MCF 10A (cell line): ENCODE measurements at regions of chr3 and their contacts with region 1.

Region 1: GRCh38 chr3:152754303-152754702 is 80.6 kb upstream of the P2RY1 start:
- DNase-seq: no peak
- H3K4me3 Mint-ChIP-seq: no peak overlapping the region
- H3K27ac Mint-ChIP-seq: no peak overlapping the region
- H3K4me1 Mint-ChIP-seq: no peaks in the 10 kb centered on the region
- H3K27me3 Mint-ChIP-seq: no peaks in the 10 kb centered on the region
- CTCF ChIP-seq: no peak

Region 2: DNA sequence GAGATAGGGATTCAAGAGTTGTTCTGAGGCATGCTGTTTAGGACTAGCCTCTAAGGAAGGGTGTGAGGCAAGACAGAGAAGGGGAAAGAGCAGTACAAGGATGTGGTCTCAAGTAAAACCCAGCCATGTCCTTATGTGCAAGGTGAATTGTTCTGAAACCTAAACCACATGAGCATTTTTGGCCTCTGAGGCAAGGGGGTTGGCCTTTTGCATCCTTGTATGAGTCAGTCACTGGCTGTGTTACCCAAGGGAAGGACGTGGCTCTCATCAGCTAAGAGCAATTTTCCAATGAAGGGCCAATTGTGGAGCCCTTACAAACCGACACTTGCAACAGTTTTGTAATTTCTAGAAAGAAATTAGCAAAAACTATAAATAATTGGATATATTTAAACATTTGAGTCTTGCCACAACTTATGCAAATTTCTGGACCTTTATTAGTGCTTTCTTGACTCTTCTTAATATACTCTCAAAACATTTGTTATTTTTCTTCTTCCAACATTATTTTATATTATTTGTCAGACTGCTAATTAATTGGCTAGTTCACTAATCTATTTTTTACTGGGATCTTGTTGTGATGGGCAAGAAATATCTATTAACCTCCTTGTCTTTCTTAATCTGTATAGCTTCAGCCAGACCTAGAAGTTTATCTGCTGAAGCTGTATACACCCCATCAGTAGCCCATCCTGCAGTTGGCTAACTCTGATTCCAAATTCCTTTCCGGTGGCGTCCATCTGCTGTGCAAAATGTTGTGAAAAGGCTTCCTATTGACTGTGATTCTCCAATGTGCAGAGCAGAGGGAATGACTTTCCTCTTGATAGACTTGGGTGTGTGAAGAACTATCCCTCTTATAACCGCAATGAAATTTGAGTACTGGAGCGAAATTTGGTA is 17.0 kb before region 1 on chr3:
- CTCF ChIA-PET with region 1: no interaction called
- POLR2A ChIA-PET with region 1: no interaction called
- intact Hi-C with region 1: no loop called
- DNase-seq: peak; percentile 81
- H3K4me3 Mint-ChIP-seq: no peak overlapping the region
- H3K27ac Mint-ChIP-seq: no peak overlapping the region
- H3K4me1 Mint-ChIP-seq: peaks cover 6% of the 10 kb centered on the region
- H3K27me3 Mint-ChIP-seq: no peaks in the 10 kb centered on the region
- CTCF ChIP-seq: no peak

Region 3: DNA sequence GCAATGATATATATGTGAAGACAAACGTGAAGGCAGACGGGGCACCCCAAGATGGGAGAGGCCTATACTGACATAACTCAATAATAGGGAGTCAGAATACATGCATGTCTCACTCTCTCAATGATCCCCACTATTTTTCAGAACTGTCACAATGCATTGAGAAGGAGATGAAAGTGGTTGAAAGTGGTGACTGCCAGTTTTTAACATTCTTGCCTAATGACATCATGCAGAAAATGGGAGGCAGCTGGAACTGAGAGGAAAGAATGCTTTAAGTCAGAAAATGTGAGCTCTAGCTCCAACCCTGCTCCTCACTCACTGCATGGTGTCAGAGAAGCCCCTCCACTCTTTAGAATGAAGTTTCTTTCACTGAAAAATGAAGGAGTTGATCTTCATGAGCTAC is 25.4 kb after region 1 on chr3:
- CTCF ChIA-PET with region 1: no interaction called
- POLR2A ChIA-PET with region 1: no interaction called
- intact Hi-C with region 1: no loop called
- DNase-seq: peak; percentile 8
- H3K4me3 Mint-ChIP-seq: no peak overlapping the region
- H3K27ac Mint-ChIP-seq: no peak overlapping the region
- H3K4me1 Mint-ChIP-seq: no peaks in the 10 kb centered on the region
- H3K27me3 Mint-ChIP-seq: no peaks in the 10 kb centered on the region
- CTCF ChIP-seq: no peak

Region 4: DNA sequence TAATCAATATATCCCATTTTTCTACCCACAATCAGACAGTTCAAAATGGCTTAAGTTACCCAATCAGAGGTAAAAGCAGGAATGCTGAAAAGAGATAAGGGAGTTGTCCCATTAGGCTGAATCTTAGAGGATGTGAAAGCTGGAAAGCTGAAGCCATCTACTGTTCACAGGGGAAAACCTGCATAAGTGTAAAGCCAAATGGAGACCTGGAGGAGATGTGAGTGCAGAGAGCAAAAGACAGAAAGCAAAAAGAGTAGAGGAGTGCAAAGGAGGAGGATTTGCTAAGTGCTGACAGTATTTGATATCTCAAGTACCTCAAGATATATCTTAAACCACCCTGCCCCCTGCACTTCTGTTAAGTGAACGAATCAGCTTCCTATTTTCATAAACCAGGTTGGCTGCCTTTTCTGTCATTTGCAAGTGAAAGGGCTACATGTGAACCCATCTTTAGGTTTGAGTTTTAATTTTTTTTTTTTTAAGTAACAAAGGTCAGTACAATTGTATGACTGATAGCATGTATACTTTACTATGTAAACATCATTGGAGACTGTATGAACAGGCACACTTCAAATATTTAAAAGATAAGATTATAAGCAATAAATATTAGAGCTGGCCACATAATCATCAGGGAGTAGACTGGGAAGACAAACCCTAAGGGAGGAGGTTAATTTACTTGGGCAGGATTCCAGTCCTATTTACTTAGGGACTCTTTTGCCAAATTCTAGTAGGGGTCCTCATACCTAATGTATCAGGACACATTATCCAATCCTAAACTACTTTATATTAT is 57.9 kb after region 1 on chr3:
- CTCF ChIA-PET with region 1: no interaction called
- POLR2A ChIA-PET with region 1: no interaction called
- intact Hi-C with region 1: loop called (anchors 5 kb)
- DNase-seq: no peak
- H3K4me3 Mint-ChIP-seq: no peak overlapping the region
- H3K27ac Mint-ChIP-seq: no peak overlapping the region
- H3K4me1 Mint-ChIP-seq: no peaks in the 10 kb centered on the region
- H3K27me3 Mint-ChIP-seq: no peaks in the 10 kb centered on the region
- CTCF ChIP-seq: no peak